Activated CD4-positive, alpha-beta T cell treated with anti-CD3 and anti-CD28 coated beads for 36 hours (primary cell): ENCODE measurements at regions of chr15 and their contacts with region 1.

Region 1: DNA sequence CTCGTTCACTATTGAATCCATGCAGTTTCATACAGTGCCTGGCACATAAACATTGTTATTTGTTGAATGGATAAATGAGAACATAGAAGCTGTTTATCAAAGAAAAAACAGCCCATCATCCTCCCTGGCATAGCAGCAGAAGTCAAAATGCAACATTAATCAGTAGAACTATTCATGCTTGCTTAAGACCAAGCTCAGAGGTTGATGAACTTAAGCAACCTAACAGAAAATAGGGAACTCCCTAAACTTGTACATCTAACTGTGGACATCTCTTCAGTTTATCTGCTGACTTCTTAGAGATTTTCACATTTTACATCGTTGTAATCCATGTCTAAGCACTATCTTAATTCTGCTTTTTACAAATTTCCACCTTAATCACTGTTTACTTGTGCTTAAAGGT is 29.2 kb downstream of the SENP8 start:
- DNase-seq: no peak
- ATAC-seq: no peak
- H3K4me3 Mint-ChIP-seq: no peak overlapping the region
- H3K27ac Mint-ChIP-seq: no peak overlapping the region
- H3K4me1 Mint-ChIP-seq: no peaks in the 10 kb centered on the region
- H3K27me3 Mint-ChIP-seq: no peaks in the 10 kb centered on the region

Region 2: DNA sequence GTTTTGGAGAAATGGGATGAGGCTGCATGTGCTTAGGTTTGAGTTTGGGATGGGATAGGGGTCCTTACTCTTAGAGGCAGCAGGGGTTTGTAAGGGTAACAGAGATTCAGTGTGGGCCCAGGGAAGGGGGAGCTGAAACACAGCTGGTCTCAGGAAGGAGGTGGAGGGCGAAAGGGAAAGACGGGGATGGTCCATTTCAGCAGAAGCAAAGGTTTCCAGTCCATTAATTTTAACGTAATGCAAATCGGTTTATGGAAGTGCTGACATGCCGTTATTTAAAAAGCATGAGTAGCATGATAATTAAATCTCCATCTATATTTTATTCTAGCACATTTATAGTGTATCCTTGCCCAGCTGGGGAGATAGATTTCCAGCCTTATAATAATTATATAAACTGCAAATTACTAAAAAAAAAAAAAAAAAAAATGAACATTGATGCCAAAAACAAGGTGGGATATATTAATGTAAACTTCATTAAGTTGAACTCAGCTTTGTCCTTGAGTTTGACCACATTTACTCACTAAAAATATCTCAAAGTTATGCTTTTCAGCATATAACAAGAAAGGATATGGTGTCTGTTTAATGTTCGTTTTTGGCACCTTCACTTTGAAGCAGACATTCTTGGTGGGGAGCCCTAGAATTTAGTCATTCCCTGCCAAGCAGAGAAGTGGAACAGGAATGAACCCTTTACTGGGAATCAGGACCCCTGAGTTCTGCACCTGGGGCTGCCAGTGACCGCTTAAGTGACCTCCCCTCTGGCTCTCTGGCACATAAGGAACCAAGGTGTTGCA is 797.5 kb before region 1 on chr15:
- CTCF ChIA-PET with region 1: no interaction called
- POLR2A ChIA-PET with region 1: no interaction called
- intact Hi-C with region 1: loop called in 1 of 2 experiments (anchors 5 kb)
- DNase-seq: no peak
- ATAC-seq: no peak
- H3K4me3 Mint-ChIP-seq: no peak overlapping the region
- H3K27ac Mint-ChIP-seq: no peak overlapping the region
- H3K4me1 Mint-ChIP-seq: peaks cover 10% of the 10 kb centered on the region
- H3K27me3 Mint-ChIP-seq: peaks cover 11% of the 10 kb centered on the region